Left cardiac atrium (tissue), 4 donors: ENCODE measurements at regions of chr6 and their contacts with region 1.

Region 1: GRCh38 chr6:118283766-118284165 is 264.3 kb upstream of the PLN start:
- DNase-seq: peak; percentile 39
- ATAC-seq: peak; percentile 69 to 72

Region 2: DNA sequence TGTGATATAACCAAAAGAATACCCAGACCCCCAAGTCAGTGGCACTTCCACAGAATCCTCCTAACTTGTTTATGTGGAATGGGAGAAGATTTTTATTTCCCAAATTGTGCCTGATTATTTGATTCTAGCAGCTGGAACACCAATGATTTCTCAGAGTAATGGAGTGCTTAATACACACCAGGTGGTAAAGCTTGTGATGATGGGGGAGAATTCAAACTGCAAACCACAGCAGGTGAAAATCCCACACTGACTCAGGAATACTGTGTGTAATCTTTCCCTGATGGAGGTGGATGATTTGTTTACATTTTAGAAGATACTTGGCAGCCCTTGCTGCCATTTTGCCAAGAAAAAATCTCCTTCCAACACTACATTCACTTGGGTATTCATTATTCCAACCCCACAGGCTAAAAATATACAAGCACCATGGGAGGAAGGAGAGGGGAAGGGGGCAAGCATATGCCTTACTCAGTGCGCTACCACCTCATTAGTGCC is 51.6 kb after region 1 on chr6:
- intact Hi-C with region 1: no loop called
- DNase-seq: no peak
- ATAC-seq: no peak

Region 3: GRCh38 chr6:118467181-118467580 is 183.4 kb after region 1 on chr6:
- intact Hi-C with region 1: loop called in 1 of 2 experiments (anchors 2 kb)
- DNase-seq: no peak
- ATAC-seq: no peak

Region 4: GRCh38 chr6:118551063-118552053 is 267.6 kb after region 1 on chr6:
- intact Hi-C with region 1: loop called in 1 of 2 experiments (anchors 5 kb)
- DNase-seq: no peak
- ATAC-seq: peak; percentile 65 to 78

Region 5: DNA sequence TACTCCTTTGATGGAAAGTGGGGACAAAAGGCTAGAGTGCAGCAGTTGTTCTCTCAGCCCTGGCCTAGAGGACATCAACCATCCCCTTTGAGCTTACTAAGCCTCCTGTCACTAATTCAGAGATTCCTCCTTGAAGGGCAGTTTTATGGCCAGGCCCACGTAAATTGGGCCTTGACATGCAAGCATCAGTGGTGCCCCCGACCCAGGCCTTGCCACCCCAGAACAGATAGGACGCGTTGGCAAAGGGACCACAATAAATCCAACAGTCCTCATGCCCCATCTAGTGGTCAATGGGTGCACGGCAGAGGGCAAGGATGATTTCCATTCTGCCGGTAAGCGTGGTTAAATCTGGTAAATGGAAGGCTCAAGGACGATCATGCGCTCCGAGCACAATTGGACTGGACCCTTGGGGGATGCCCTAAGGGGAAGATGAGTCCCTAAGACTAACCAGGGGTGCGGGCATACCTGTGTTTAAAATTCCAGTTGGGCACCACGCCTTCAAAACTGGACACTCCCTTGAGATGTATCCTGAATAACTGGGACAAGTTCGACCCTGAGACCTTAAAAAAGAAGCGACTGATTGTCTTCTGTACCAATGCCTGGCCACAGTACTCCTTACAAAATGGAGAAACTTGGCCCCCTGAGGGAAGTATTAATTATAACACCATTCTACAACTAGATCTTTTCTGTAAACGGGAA is 335.1 kb after region 1 on chr6:
- intact Hi-C with region 1: loop called in 1 of 2 experiments (anchors 2 kb)
- DNase-seq: peak; percentile 52
- ATAC-seq: peak; percentile 63 to 75

Region 6: GRCh38 chr6:118800394-118801071 is 516.8 kb after region 1 on chr6:
- intact Hi-C with region 1: loop called in 1 of 2 experiments (anchors 5 kb)
- DNase-seq: peak; percentile 77
- ATAC-seq: peak; percentile 86 to 89